Heart left ventricle (tissue), 16 donors: ENCODE measurements at regions of chr16 and their contacts with region 1.

Region 1: GRCh38 chr16:77951775-77952174 is 70.6 kb upstream of the CLEC3A start:
- DNase-seq: no peak
- ATAC-seq: no peak
- H3K4me3 ChIP-seq: no peak overlapping the region
- H3K27ac ChIP-seq: no peak overlapping the region
- H3K4me1 ChIP-seq: peaks cover 0 to 9% (median 0%) of the 10 kb centered on the region in 12 donors
- H3K27me3 ChIP-seq: peaks cover 0 to 7% (median 0%) of the 10 kb centered on the region in 9 donors
- CTCF ChIP-seq: peak in 5 of 12 donors; percentile 20 to 42 (median 34)
- POLR2A ChIP-seq: no peak

Region 2: GRCh38 chr16:77775911-77776909 is 175.6 kb before region 1 on chr16:
- intact Hi-C with region 1: no loop called
- DNase-seq: no peak
- ATAC-seq: no peak
- H3K4me3 ChIP-seq: no peak overlapping the region
- H3K27ac ChIP-seq: no peak overlapping the region
- H3K4me1 ChIP-seq: no peaks in the 10 kb centered on the region
- H3K27me3 ChIP-seq: no peaks in the 10 kb centered on the region
- CTCF ChIP-seq: no peak
- POLR2A ChIP-seq: no peak

Region 3: DNA sequence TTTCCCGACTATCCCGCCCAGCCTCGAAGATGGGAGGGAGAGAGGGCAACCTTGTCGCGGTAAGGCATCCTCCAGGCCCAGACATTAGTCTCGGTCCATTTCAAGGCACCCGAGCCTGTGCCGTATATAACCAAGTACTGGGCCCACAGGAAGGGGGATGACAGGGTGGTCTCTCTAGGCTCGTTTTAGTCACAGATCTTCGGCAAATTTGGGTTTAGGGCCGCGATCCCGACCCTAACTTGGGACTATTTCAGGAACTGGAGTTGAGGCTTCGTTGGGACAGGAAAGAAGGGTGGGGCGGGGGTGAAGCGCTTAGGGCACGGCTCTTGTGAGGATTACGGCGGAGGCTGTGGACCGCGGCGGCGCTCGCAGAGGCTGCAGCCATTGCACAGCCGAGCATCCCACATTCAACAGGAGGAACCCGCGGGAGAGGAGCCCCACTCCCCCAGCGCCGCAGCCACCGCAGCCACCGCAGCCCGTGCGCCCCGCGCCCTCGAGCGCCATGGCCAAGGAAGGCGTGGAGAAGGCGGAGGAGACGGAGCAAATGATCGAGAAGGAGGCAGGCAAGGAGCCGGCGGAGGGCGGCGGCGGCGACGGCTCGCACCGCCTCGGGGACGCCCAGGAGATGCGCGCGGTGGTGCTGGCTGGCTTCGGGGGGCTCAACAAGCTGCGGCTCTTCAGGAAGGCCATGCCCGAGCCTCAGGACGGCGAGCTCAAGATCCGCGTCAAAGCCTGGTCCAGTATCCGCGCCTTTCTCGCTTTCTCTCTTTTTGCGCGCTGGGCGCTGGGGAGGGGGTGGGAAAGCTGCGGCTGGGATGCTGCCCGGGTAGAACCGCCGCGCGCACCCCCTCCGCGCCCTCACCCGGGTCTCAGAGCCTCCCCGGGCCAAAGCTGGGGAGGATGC is 163.3 kb before region 1 on chr16 and contains the start of gene VAT1L:
- intact Hi-C with region 1: loop called in 1 of 10 experiments (anchors 5 kb)
- DNase-seq: peak in 3 of 5 donors; percentile 32 to 34 (median 33)
- ATAC-seq: peak; percentile 52 to 94 (median 88)
- H3K4me3 ChIP-seq: peak within 1 kb of the TSS; percentile 47 to 78 (median 62)
- H3K27ac ChIP-seq: peak within 1 kb of the TSS in 2 of 12 donors; percentile 9 to 22
- H3K4me1 ChIP-seq: peaks cover 0 to 25% (median 7%) of the 10 kb centered on the region in 12 donors
- H3K27me3 ChIP-seq: peaks cover 6 to 66% (median 13%) of the 10 kb centered on the region in 9 donors
- CTCF ChIP-seq: no peak
- POLR2A ChIP-seq: no peak
- total RNA-seq, gene VAT1L: 2.9 to 57.5 (median 14.3) TPM

Region 4: GRCh38 chr16:77856438-77857160 is 95.2 kb before region 1 on chr16:
- intact Hi-C with region 1: loop called in 2 of 10 experiments (anchors 5 kb)
- DNase-seq: no peak
- ATAC-seq: no peak
- H3K4me3 ChIP-seq: no peak overlapping the region
- H3K27ac ChIP-seq: no peak overlapping the region
- H3K4me1 ChIP-seq: peaks cover 0 to 25% (median 7%) of the 10 kb centered on the region in 12 donors
- H3K27me3 ChIP-seq: no peaks in the 10 kb centered on the region
- CTCF ChIP-seq: no peak
- POLR2A ChIP-seq: no peak

Region 5: DNA sequence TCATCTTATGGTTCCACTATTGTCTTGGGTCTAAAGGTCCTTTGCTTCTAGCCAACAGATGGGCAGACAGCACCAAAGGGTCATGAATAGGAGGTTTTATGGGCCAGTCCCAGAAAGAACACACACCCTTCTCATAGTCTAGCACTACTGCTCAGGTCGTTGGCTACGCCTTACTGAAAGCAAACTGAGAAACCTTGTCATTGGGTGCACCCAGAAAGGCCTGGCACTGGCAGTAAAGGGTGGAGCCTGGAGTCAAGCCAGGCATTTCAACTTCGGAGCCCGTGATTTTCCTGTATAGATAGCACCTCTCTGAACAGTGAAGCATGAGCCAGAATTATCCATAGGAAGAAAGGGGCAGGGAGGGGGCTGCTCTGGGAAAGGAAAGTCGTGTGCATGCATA is 88.5 kb before region 1 on chr16:
- intact Hi-C with region 1: loop called in 2 of 10 experiments (anchors 5 kb)
- DNase-seq: peak in 3 of 5 donors; percentile 28 to 56 (median 53)
- ATAC-seq: peak; percentile 10 to 46 (median 26)
- H3K4me3 ChIP-seq: no peak overlapping the region
- H3K27ac ChIP-seq: peak overlapping the region in 7 of 12 donors; percentile 17 to 91 (median 54)
- H3K4me1 ChIP-seq: peaks cover 0 to 35% (median 12%) of the 10 kb centered on the region in 12 donors
- H3K27me3 ChIP-seq: no peaks in the 10 kb centered on the region
- CTCF ChIP-seq: no peak
- POLR2A ChIP-seq: no peak

Region 6: GRCh38 chr16:77918809-77919707 is 32.7 kb before region 1 on chr16:
- intact Hi-C with region 1: no loop called
- DNase-seq: no peak
- ATAC-seq: peak in 3 of 4 donors; percentile 19 to 53 (median 47)
- H3K4me3 ChIP-seq: no peak overlapping the region
- H3K27ac ChIP-seq: no peak overlapping the region
- H3K4me1 ChIP-seq: peaks cover 0 to 38% (median 4%) of the 10 kb centered on the region in 12 donors
- H3K27me3 ChIP-seq: no peaks in the 10 kb centered on the region
- CTCF ChIP-seq: no peak
- POLR2A ChIP-seq: no peak

Region 7: GRCh38 chr16:77993111-77993985 is 41.6 kb after region 1 on chr16:
- intact Hi-C with region 1: no loop called
- DNase-seq: no peak
- ATAC-seq: peak; percentile 69 to 76 (median 72)
- H3K4me3 ChIP-seq: no peak overlapping the region
- H3K27ac ChIP-seq: peak overlapping the region in 5 of 12 donors; percentile 42 to 72 (median 62)
- H3K4me1 ChIP-seq: peaks cover 0 to 11% (median 0%) of the 10 kb centered on the region in 12 donors
- H3K27me3 ChIP-seq: no peaks in the 10 kb centered on the region
- CTCF ChIP-seq: no peak
- POLR2A ChIP-seq: no peak